ENCODE measurements at regions of chr22 and their contacts with region 1.

Region 1: DNA sequence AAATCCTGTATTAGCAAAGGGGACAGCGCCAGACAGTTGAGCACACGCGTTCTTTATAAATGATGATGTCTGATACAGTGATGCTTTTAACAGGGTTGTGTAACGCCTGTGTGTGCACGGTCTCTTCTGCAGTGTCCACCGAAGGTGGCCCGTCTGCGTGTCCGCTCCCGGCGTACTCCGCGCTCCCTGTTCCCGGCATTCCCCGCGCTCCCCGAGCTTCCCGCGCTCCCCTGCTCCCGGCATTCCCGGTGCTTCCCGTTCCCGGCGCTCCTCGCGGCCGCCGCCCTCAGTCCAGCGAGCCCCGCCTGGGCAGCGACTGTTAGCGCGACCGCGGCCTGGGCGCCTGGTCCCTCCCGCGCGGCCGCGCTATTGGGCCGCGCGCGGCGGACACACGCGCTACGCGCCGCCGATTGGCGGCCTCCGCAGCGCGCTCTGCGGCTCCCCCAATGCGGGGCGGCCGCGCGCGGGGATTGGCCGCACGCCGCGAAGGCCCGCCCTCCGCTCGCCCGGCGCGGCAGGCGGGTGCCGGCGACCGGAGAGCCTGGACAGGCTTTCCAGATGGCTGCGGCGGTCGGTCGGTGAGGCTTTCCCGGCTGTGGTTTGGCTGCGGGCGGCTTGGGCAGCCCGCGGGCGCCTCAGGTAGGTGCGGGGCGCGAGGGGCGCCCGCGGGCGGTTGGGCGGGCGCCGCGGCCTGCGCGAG is at the start of gene DGCR8:
- DNase-seq: peak; percentile 70
- ATAC-seq: peak; percentile 94
- H3K4me3 ChIP-seq: peak within 1 kb of the TSS; percentile 80 to 82
- H3K27ac ChIP-seq: peak within 1 kb of the TSS; percentile 94
- H3K4me1 ChIP-seq: peaks cover 11% of the 10 kb centered on the region
- H3K27me3 ChIP-seq: no peaks in the 10 kb centered on the region
- CTCF ChIP-seq: no peak
- total RNA-seq, gene DGCR8: 35.0 TPM

Region 2: DNA sequence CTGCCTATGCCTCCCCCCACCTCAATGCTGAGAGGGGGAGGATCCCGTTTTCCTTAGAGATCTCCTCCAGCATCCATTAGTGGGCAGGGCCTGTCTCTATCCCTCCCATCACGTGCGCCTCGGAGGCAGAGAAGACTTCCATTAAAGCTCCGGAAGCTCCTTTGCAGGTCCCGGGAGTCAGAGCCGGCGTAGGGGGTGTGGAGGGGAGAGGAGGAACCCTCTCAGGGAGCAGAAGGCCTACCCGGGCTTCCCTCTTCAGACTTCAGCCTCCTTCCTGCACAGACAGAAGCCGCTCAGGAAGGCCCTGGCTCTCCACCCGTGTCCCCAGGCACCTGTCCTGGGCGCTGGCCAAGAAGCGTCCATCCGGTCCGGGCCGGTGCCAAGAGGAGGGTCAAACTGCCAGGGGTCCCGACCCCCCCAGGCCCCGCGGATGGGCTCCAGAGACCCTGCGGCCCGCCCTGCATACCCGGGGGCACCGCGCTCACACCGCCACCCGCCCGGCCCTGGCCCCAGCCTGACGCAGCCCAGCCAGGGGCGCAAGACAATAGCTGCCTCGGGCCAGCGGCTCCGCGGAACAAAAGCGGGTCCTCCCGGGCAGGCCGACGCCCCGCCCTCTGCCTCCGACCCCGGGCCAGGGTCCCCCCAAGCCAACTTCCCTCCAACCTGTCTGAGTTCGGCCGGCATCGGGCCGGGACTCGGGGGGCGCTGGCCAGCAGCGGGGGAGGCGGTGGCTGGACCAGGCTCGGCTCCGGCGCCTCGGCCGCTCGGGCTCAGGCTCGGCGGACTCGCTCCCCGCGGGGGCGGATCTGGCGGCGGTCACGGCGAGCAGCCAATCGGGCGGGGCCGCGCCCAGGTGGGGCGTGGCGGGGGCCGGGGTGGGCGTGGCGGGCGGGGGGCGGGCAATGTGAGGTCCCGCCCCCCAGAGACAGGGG is 93.2 kb before region 1 on chr22:
- CTCF ChIA-PET with region 1: no interaction called
- POLR2A ChIA-PET with region 1: no interaction called
- in situ Hi-C with region 1: no loop called
- intact Hi-C with region 1: no loop called
- DNase-seq: no peak
- ATAC-seq: peak; percentile 87
- H3K4me3 ChIP-seq: peak overlapping the region; percentile 54 to 57
- H3K27ac ChIP-seq: no peak overlapping the region
- H3K4me1 ChIP-seq: peaks cover 12% of the 10 kb centered on the region; the same call in 1 of the 2 replicates
- H3K27me3 ChIP-seq: no peaks in the 10 kb centered on the region
- CTCF ChIP-seq: no peak

Region 3: DNA sequence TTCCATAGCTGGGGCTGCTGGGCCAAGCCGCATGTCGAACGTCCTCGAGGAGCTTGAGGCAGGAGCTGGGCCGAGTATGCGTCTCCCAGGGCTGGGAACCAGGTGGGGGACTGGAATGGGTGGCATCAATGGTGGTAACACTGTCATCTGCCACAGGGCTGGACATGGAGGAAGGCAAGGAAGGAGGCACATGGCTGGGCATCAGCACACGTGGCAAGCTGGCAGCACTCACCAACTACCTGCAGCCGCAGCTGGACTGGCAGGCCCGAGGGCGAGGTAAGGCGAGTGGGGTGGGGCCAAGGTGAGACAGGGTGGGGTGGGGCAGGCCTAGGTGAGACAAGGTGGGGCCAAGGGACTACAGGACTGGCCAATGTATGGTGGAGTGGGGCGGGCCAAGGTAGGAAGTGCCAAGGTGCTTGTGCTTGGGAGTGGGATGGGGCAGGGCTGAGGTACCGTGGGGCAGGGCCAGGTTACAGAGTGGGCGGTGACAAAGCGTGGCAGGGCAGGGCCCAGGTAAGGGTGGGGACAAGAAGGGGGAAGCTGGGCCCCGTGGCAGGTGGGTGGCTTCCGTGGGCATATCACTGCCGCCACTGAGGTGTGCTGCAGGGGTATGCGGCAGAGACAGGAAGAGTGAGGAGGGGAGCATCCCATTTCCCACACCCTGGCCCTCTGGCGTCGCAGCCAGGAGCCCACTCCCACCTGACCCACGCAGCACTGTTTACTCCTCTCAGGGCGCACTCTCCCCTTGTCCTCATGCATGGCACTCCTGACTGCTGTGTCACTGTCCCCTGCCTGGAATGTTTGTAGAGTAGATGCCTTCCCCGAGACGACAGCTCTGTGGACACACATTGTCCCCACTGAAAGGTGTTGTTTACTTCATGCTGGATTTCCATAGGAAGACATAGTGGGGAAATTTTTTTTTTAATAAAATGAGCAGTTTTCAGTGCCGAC is 27.3 kb before region 1 on chr22:
- CTCF ChIA-PET with region 1: no interaction called
- POLR2A ChIA-PET with region 1: no interaction called
- in situ Hi-C with region 1: no loop called
- intact Hi-C with region 1: no loop called
- DNase-seq: no peak
- ATAC-seq: no peak
- H3K4me3 ChIP-seq: no peak overlapping the region
- H3K27ac ChIP-seq: no peak overlapping the region
- H3K4me1 ChIP-seq: no peaks in the 10 kb centered on the region
- H3K27me3 ChIP-seq: no peaks in the 10 kb centered on the region
- CTCF ChIP-seq: no peak

Region 4: GRCh38 chr22:20066617-20067383 is 13.1 kb before region 1 on chr22:
- CTCF ChIA-PET with region 1: no interaction called
- POLR2A ChIA-PET with region 1: interaction called, 12 read pairs
- in situ Hi-C with region 1: no loop called
- intact Hi-C with region 1: no loop called
- DNase-seq: no peak
- ATAC-seq: no peak
- H3K4me3 ChIP-seq: no peak overlapping the region
- H3K27ac ChIP-seq: no peak overlapping the region
- H3K4me1 ChIP-seq: no peaks in the 10 kb centered on the region
- H3K27me3 ChIP-seq: no peaks in the 10 kb centered on the region
- CTCF ChIP-seq: no peak

Measured in Panc1 (cell line).